Mucosa of descending colon (tissue), 3 donors: ENCODE measurements at regions of chrX and their contacts with region 1.

Region 1: DNA sequence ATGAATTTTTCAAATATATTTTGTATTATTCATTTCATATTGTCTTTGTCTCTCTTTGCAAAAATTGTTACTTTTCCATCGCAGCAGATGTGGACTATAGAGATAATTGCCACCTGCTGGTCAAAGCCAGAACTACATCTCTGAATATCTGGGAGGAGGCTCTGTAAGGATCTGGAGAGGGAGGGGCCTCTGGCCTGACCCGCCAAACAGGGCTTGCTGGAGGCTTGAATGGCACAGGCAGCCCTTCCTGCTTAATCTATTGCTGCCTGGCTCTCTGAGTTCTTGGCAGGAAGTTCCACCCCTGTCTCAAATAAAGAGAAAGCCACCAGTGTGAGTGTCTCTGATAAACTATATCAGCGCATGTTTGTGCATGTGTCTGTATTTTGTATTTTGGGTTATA is 132.4 kb downstream of the ZMAT1 start:
- DNase-seq: peak; percentile 65 to 95 (median 71)
- ATAC-seq: peak; percentile 100
- H3K4me3 ChIP-seq: no peak overlapping the region
- H3K4me1 ChIP-seq: no peaks in the 10 kb centered on the region
- CTCF ChIP-seq: peak; percentile 25

Region 2: GRCh38 chrX:101595739-101596419 is 203.5 kb before region 1 on chrX:
- intact Hi-C with region 1: loop called in 1 of 2 experiments (anchors 10 kb)
- DNase-seq: peak in 1 of 3 donors; percentile 32
- ATAC-seq: peak; percentile 76
- H3K4me3 ChIP-seq: no peak overlapping the region
- H3K4me1 ChIP-seq: no peaks in the 10 kb centered on the region
- CTCF ChIP-seq: peak; percentile 17

Region 3: GRCh38 chrX:101708163-101708562 is 91.2 kb before region 1 on chrX:
- intact Hi-C with region 1: no loop called
- DNase-seq: no peak
- ATAC-seq: no peak
- H3K4me3 ChIP-seq: no peak overlapping the region
- H3K4me1 ChIP-seq: no peaks in the 10 kb centered on the region
- CTCF ChIP-seq: no peak